ENCODE measurements at regions of chr4 and their contacts with region 1.

Region 1: GRCh38 chr4:2745981-2746806 is 9.9 kb downstream of the TNIP2 start:
- DNase-seq: peak; percentile 92
- H3K4me3 Mint-ChIP-seq: peak overlapping the region; percentile 79
- H3K27ac Mint-ChIP-seq: peak overlapping the region; percentile 96
- H3K4me1 Mint-ChIP-seq: peaks cover 60% of the 10 kb centered on the region
- H3K27me3 Mint-ChIP-seq: no peaks in the 10 kb centered on the region

Region 2: GRCh38 chr4:2041234-2042130 is 704.7 kb before region 1 on chr4:
- intact Hi-C with region 1: loop called (anchors 5 kb)
- DNase-seq: peak; percentile 87
- H3K4me3 Mint-ChIP-seq: peak overlapping the region; percentile 84
- H3K27ac Mint-ChIP-seq: no peak overlapping the region
- H3K4me1 Mint-ChIP-seq: peaks cover 7% of the 10 kb centered on the region
- H3K27me3 Mint-ChIP-seq: peaks cover 31% of the 10 kb centered on the region

Region 3: GRCh38 chr4:2418650-2419571 is 327.3 kb before region 1 on chr4 and contains the start of gene CFAP99:
- intact Hi-C with region 1: loop called (anchors 1 kb)
- DNase-seq: peak; percentile 94
- H3K4me3 Mint-ChIP-seq: peak within 1 kb of the TSS; percentile 85
- H3K27ac Mint-ChIP-seq: peak within 1 kb of the TSS; percentile 82
- H3K4me1 Mint-ChIP-seq: peaks cover 39% of the 10 kb centered on the region
- H3K27me3 Mint-ChIP-seq: peaks cover 55% of the 10 kb centered on the region
- total RNA-seq, gene CFAP99: not detected in 2 replicates

Region 4: DNA sequence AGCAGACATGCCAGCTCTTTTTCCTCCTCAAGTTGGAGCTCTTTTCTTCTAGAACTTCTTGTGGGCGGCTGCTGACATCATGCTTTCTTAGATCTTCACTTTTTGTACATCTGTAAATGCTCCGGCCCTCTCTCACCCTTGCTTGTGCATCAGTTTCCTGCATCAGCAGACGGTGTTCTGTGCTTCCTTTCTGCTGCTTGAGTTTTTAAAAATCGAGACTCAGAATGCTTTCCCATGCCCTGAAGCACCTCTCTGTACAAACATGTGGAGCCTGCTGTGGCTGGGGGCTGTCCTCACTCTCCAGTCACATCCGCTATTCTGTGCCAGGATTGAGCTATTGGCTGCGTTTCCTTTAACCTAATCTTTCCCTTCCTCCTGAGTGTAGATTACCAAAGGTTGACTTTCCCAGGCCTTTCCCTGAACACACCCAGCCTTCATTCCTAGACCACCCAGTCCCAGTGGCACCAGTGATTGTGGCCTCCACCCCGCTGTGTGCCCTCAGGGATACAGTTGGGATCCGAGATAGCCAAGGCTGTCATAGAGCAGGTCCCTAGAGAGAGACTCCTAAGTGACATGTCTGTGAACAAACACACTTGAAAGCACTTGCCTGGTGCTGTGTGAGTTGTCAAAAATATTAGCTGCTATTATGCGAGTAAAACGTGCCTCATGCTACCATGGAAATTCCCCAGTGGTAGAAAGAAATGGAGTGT is 32.0 kb before region 1 on chr4:
- intact Hi-C with region 1: loop called (anchors 1 kb)
- DNase-seq: peak; percentile 38
- H3K4me3 Mint-ChIP-seq: peak overlapping the region; percentile 35
- H3K27ac Mint-ChIP-seq: peak overlapping the region; percentile 84
- H3K4me1 Mint-ChIP-seq: peaks cover 33% of the 10 kb centered on the region
- H3K27me3 Mint-ChIP-seq: no peaks in the 10 kb centered on the region

Region 5: DNA sequence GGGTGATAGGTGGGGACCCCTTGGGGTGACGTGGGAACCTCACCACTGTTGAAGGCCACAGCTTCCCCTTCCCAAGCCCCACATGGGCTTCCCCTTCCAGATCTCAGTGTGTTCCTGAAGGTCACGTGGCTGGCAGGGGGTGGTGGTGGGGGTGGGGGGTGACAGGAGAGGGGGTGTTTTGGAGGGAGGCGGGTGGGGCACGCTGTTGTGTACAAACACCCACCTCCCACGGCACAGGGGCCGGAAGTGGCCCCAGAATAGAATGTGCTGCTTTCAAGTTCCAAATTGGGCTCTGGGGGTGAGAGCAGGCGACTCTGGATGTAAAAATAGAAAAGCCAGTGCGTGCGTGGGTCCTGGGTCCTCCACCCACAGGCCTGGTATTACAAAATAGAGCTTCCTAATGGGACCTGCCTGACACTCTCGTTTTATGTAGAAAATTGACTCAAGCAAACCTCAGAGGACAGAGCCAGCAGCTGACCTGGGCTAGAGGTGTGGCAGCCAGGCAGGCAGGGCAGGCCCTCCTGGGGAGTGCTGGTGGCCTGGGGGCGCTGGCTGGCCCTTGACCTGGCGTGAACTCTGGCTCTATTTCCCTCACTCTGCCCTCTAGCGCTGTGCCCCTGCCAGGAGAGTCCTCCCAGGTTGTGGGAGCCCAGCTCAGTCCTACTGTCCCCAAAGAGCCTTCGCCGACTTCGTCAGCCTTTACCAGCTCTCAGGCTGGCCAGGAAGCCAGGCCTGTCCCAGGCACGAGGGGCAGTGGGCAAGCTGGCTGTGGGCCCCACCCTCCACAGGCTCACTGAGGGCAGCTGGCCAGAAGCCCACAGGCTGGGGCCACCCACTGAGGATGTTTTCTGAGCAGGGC is 41.3 kb after region 1 on chr4:
- intact Hi-C with region 1: no loop called
- DNase-seq: peak; percentile 32
- H3K4me3 Mint-ChIP-seq: peak overlapping the region; percentile 56
- H3K27ac Mint-ChIP-seq: peak overlapping the region; percentile 92
- H3K4me1 Mint-ChIP-seq: peaks cover 49% of the 10 kb centered on the region
- H3K27me3 Mint-ChIP-seq: no peaks in the 10 kb centered on the region

Region 6: DNA sequence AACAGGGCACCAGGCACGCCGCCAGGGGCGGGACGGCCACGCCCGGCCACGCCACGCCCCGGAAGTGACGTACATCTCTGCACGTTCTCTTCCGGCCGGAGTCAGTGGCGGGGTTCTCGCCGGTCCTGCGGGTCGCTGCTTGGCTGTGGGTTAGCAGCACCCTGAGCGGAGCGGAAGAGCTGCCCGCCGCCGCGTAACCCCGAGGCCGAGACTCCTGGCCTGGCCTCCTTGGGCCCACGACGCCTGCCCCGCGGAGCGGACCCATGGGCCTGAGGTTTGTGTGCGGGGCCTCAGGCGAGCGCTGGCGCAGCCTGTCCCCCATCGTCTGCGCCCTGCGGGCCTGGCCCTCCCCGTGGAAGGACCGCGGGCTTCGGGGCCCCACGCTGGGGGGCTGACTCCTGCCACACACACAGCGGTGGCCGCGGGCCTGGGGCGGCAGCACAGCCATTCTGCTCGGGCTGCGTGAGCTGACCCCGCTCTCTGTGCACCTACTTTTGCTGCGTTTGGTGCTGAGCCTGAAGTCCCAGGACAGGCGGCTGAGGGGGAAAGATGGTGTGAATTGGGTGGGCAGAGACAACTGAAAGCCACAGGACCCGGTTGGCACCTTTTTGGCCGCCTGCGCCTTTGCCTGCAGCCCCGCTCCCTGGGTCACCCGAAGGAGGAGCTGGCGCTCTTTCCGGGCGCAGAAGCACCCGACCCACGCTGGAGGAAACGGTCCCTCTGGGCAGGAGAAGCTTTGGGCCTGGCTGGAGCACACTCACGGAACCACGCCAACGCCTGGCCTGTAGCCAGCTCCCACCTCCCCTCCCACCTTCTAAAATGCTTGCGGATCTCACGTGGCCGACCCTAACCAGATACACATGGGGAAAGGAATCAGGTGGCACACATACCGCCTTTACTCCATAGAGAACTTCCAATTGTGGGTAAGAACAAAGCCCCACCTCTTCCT is 188.9 kb after region 1 on chr4:
- intact Hi-C with region 1: loop called (anchors 1 kb)
- DNase-seq: peak; percentile 95
- H3K4me3 Mint-ChIP-seq: peak overlapping the region; percentile 94
- H3K27ac Mint-ChIP-seq: peak overlapping the region; percentile 87
- H3K4me1 Mint-ChIP-seq: peaks cover 49% of the 10 kb centered on the region
- H3K27me3 Mint-ChIP-seq: no peaks in the 10 kb centered on the region

Region 7: GRCh38 chr4:3047464-3048286 is 301.5 kb after region 1 on chr4:
- intact Hi-C with region 1: loop called (anchors 2 kb)
- DNase-seq: peak; percentile 80
- H3K4me3 Mint-ChIP-seq: peak overlapping the region; percentile 49
- H3K27ac Mint-ChIP-seq: peak overlapping the region; percentile 48
- H3K4me1 Mint-ChIP-seq: peaks cover 38% of the 10 kb centered on the region
- H3K27me3 Mint-ChIP-seq: peaks cover 26% of the 10 kb centered on the region

Measured in activated T-helper 1 cell treated with anti-CD3 and anti-CD28 coated beads, Interleukin-12 subunit alpha, Interleukin-12 subunit beta, Interleukin-2, Interleukin-4 antibody, amounts not matched to agents 30 ng/mL and 10 ng/mL and 1 ng/mL, durations not matched to agents 14 hours and 24 hours and 36 hours (primary cell).